ENCODE measurements at regions of chr2 and their contacts with region 1.

Region 1: DNA sequence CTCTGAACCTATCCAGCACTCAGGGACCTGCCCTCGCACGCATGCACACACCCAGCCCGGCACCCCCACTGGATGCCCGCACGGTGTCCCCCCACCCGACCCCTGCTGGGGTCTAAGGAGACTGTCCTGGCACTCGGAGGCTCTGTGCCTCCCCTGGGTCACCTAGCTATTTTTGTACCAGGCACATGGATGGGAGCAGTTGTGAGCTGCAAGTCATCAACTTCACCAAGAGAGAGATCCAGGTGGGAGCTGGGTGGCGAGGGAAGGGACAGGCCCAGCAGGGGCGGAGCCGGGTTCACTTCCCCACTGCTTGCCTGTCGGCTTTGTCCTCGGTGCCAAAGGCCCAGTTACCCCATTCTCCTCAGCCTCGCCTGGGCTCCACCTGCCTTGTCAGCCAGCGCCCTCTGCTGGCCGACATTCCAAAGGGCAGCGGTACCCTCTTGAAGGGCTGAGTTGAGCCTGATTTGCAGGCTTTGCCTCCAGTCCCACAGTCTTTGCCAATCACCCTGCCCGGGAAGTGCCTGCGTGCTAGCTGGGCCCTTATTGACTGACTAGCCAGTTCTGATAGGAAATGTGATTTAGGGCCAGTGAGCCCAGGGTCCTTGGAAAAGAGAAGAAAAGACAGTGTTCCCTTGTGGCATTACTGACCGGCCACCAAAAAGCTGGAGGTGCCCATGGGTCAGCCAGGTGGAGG is 5.8 kb downstream of the NT5DC4 start:
- DNase-seq: peak; percentile 89 to 94
- H3K4me3 ChIP-seq: no peak overlapping the region
- H3K27ac ChIP-seq: no peak overlapping the region
- H3K4me1 ChIP-seq: no peaks in the 10 kb centered on the region; a peak in 2 of 7 replicates
- H3K27me3 ChIP-seq: no peaks in the 10 kb centered on the region
- CTCF ChIP-seq: peak in 2 of 3 experiments; percentile 98; a peak in 3 of 4 replicates
- EP300 ChIP-seq: no peak
- POLR2A ChIP-seq: no peak
- RAD21 ChIP-seq: peak; percentile 99

Region 2: GRCh38 chr2:112584134-112584890 is 142.3 kb before region 1 on chr2 and contains the start of gene CHCHD5:
- CTCF ChIA-PET with region 1: interaction called, 17 read pairs
- POLR2A ChIA-PET with region 1: interaction called, 3 read pairs
- DNase-seq: peak; percentile 85 to 89
- H3K4me3 ChIP-seq: peak within 1 kb of the TSS; percentile 82 to 93 (median 88)
- H3K27ac ChIP-seq: peak within 1 kb of the TSS; percentile 96
- H3K4me1 ChIP-seq: peaks cover 0 to 4% (median 2%) of the 10 kb centered on the region in 4 experiments; a peak in 4 of 7 replicates
- H3K27me3 ChIP-seq: no peaks in the 10 kb centered on the region
- CTCF ChIP-seq: no peak; a peak in 1 of 4 replicates
- EP300 ChIP-seq: peak in 1 of 2 experiments; percentile 48; a peak in 1 of 3 replicates
- POLR2A ChIP-seq: peak in 1 of 2 experiments; percentile 92; a peak in 2 of 3 replicates
- RAD21 ChIP-seq: no peak
- total RNA-seq, gene CHCHD5: 27.2 and 30.2 TPM in 2 replicates

Region 3: GRCh38 chr2:112626604-112627059 is 100.0 kb before region 1 on chr2:
- CTCF ChIA-PET with region 1: interaction called, 185 read pairs
- POLR2A ChIA-PET with region 1: interaction called, 3 read pairs
- DNase-seq: peak in 1 of 2 experiments; percentile 65
- H3K4me3 ChIP-seq: no peak overlapping the region
- H3K27ac ChIP-seq: no peak overlapping the region
- H3K4me1 ChIP-seq: peaks cover 0 to 7% (median 5%) of the 10 kb centered on the region in 4 experiments; a peak in 4 of 7 replicates
- H3K27me3 ChIP-seq: no peaks in the 10 kb centered on the region
- CTCF ChIP-seq: peak; percentile 87 to 90 (median 89)
- EP300 ChIP-seq: no peak
- POLR2A ChIP-seq: no peak
- RAD21 ChIP-seq: peak; percentile 86 to 90

Region 4: DNA sequence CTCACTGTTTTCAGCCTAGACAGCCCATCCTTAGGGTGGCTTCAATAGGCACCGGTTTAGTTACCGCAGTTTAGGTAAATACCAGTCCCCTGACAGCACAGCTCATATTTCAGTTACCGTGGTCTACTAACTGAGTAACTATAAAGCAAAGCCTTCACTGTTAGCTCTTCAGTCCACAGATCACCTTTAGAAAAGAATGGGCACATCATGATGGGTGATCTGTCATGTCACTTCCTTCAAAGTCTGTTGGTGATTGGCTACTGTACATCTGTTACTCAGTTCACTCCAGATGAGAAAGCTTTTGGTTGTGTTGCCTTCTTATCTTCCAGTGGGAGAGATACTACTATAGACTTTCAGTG is 59.9 kb before region 1 on chr2:
- CTCF ChIA-PET with region 1: interaction called, 26 read pairs
- POLR2A ChIA-PET with region 1: interaction called, 4 read pairs
- DNase-seq: no peak
- H3K4me3 ChIP-seq: no peak overlapping the region
- H3K27ac ChIP-seq: no peak overlapping the region
- H3K4me1 ChIP-seq: no peaks in the 10 kb centered on the region
- H3K27me3 ChIP-seq: no peaks in the 10 kb centered on the region
- CTCF ChIP-seq: no peak
- EP300 ChIP-seq: no peak
- POLR2A ChIP-seq: no peak
- RAD21 ChIP-seq: no peak

Region 5: GRCh38 chr2:112685271-112685884 is 41.3 kb before region 1 on chr2:
- CTCF ChIA-PET with region 1: interaction called, 40 read pairs
- POLR2A ChIA-PET with region 1: no interaction called
- DNase-seq: no peak
- H3K4me3 ChIP-seq: no peak overlapping the region
- H3K27ac ChIP-seq: no peak overlapping the region
- H3K4me1 ChIP-seq: no peaks in the 10 kb centered on the region
- H3K27me3 ChIP-seq: no peaks in the 10 kb centered on the region
- CTCF ChIP-seq: no peak
- EP300 ChIP-seq: no peak
- POLR2A ChIP-seq: no peak
- RAD21 ChIP-seq: no peak

Region 6: DNA sequence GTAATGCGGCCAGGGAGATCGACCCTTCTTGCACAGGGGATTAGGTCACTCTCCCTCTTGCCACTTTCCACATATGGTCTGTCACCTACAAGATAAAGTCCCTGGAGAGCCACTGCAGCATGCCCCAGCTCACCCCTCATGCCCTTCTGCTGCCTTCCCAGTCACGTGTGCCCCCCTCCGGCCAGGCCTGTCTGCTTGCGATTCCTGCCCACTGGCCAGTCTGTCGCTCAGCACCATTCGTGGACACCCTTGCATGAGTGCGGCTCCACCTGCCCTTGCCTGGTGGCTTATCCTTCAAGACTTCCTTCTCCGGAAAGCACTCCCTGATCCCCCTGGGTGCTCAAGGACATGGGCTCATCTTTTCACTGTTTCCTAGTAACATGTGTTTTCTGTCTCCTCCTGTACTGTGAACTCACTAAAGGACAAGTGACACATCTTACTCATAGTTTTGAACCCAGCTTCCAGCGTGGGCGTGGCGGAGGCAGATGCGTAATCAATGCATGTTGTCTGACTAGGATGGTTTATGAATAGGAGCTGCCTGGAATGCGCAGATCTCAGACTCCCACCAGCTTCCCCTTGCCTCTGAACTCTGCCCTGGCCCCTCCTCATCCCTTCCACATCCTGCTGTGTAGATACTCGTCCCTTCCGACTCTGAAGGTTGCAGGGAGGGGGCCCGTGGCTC is 13.6 kb before region 1 on chr2:
- CTCF ChIA-PET with region 1: interaction called, 29 read pairs
- POLR2A ChIA-PET with region 1: no interaction called
- DNase-seq: peak in 1 of 2 experiments; percentile 42
- H3K4me3 ChIP-seq: no peak overlapping the region
- H3K27ac ChIP-seq: no peak overlapping the region
- H3K4me1 ChIP-seq: no peaks in the 10 kb centered on the region; a peak in 1 of 7 replicates
- H3K27me3 ChIP-seq: no peaks in the 10 kb centered on the region
- CTCF ChIP-seq: no peak
- EP300 ChIP-seq: no peak
- POLR2A ChIP-seq: no peak
- RAD21 ChIP-seq: no peak

Region 7: DNA sequence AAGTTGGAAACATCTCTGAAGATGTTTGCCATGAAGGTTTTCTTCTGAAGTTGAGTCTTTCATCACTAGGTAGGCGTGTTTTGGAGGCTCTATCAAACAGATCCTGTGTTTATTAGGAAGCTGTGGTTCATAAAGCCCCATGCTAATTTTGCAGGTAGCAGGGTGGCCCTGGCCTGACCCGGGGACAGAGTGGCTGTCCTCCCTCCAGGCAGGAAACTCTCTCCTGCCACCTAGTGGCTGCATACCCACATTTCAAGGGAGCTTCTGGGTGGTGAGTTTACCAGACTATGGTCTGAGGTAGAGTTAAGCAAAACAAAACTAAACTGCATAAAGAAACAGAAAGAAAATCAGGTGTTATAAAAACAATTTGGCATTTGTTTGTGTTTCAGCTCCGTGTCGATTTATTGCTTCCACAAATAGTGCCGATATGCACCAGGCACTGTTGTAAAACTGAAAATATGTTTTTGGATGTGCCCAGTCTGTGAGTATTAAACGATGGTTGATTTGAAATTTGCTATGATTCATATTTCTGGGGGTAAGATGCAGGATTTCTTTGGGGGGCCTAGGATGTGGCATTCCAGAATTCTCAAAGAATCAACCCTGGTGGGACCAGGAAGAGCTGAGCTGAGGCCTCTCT is 158.3 kb after region 1 on chr2:
- CTCF ChIA-PET with region 1: interaction called, 20 read pairs
- POLR2A ChIA-PET with region 1: no interaction called
- DNase-seq: peak; percentile 46 to 96
- H3K4me3 ChIP-seq: no peak overlapping the region
- H3K27ac ChIP-seq: no peak overlapping the region
- H3K4me1 ChIP-seq: 0 out of 7 replicates have a peak, but pooled peaks cover 0 to 2% (median 0%) of the 10 kb centered on the region in 4 experiments
- H3K27me3 ChIP-seq: no peaks in the 10 kb centered on the region
- CTCF ChIP-seq: peak; percentile 70 to 88 (median 83)
- EP300 ChIP-seq: no peak
- POLR2A ChIP-seq: no peak
- RAD21 ChIP-seq: peak; percentile 94 to 96